ENCODE measurements at regions of chr7 and their contacts with region 1.

Region 1: GRCh38 chr7:39894904-39895303 is 55.2 kb upstream of the CDK13 start:
- DNase-seq: no peak
- H3K4me3 ChIP-seq: no peak overlapping the region
- H3K27ac ChIP-seq: no peak overlapping the region
- H3K4me1 ChIP-seq: no peaks in the 10 kb centered on the region
- H3K27me3 ChIP-seq: no peaks in the 10 kb centered on the region
- CTCF ChIP-seq: no peak
- POLR2A ChIP-seq: no peak

Region 2: GRCh38 chr7:39838326-39838725 is 56.6 kb before region 1 on chr7:
- intact Hi-C with region 1: no loop called
- DNase-seq: no peak
- H3K4me3 ChIP-seq: no peak overlapping the region
- H3K27ac ChIP-seq: no peak overlapping the region
- H3K4me1 ChIP-seq: peaks cover 5 to 6% of the 10 kb centered on the region in 2 donors
- H3K27me3 ChIP-seq: no peaks in the 10 kb centered on the region
- CTCF ChIP-seq: no peak
- POLR2A ChIP-seq: no peak

Region 3: DNA sequence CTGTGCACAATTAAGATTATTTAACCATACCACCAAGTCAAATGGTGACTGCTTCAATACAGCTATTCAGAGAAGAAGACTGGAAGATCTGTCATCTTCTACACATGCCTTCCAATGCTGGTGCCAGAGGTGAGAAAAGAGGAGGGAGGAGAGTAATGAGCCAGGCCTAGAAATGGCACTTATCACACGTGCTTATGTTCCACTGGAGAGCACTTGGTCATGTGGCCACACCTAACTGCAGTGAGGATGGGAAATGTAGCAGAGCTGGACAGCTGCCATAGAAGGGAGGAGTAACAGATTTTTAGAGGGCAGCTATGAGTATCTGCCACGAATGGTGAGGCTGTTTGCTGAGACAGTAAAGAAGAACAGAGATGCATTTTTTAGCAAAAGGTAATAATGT is 162.4 kb after region 1 on chr7:
- intact Hi-C with region 1: loop called (anchors 5 kb)
- DNase-seq: peak; percentile 65 to 70
- H3K4me3 ChIP-seq: no peak overlapping the region
- H3K27ac ChIP-seq: no peak overlapping the region
- H3K4me1 ChIP-seq: peaks cover 9 to 17% of the 10 kb centered on the region in 2 donors
- H3K27me3 ChIP-seq: no peaks in the 10 kb centered on the region
- CTCF ChIP-seq: no peak
- POLR2A ChIP-seq: no peak

Measured in thyroid gland (tissue), 4 donors.